Uterus (tissue), 4 donors: ENCODE measurements at regions of chr6 and their contacts with region 1.

Region 1: GRCh38 chr6:133923938-133924593 is 29.0 kb upstream of the TBPL1 start:
- DNase-seq: peak; percentile 64 to 76
- H3K4me3 ChIP-seq: no peak overlapping the region
- H3K27ac ChIP-seq: no peak overlapping the region
- H3K4me1 ChIP-seq: no peaks in the 10 kb centered on the region
- H3K27me3 ChIP-seq: peaks cover 0 to under 1% of the 10 kb centered on the region in 2 donors
- CTCF ChIP-seq: peak; percentile 81 to 94 (median 90)
- POLR2A ChIP-seq: no peak

Region 2: GRCh38 chr6:133871131-133871530 is 52.9 kb before region 1 on chr6:
- intact Hi-C with region 1: no loop called
- DNase-seq: no peak
- H3K4me3 ChIP-seq: no peak overlapping the region
- H3K27ac ChIP-seq: no peak overlapping the region
- H3K4me1 ChIP-seq: no peaks in the 10 kb centered on the region
- H3K27me3 ChIP-seq: no peaks in the 10 kb centered on the region
- CTCF ChIP-seq: no peak
- POLR2A ChIP-seq: no peak

Region 3: GRCh38 chr6:134063966-134064445 is 139.9 kb after region 1 on chr6:
- intact Hi-C with region 1: loop called (anchors 10 kb)
- DNase-seq: peak; percentile 66 to 75
- H3K4me3 ChIP-seq: no peak overlapping the region
- H3K27ac ChIP-seq: peak overlapping the region in 1 of 2 donors; percentile 50
- H3K4me1 ChIP-seq: peaks cover 0 to 4% of the 10 kb centered on the region in 2 donors
- H3K27me3 ChIP-seq: no peaks in the 10 kb centered on the region
- CTCF ChIP-seq: peak; percentile 77 to 88 (median 86)
- POLR2A ChIP-seq: no peak

Region 4: DNA sequence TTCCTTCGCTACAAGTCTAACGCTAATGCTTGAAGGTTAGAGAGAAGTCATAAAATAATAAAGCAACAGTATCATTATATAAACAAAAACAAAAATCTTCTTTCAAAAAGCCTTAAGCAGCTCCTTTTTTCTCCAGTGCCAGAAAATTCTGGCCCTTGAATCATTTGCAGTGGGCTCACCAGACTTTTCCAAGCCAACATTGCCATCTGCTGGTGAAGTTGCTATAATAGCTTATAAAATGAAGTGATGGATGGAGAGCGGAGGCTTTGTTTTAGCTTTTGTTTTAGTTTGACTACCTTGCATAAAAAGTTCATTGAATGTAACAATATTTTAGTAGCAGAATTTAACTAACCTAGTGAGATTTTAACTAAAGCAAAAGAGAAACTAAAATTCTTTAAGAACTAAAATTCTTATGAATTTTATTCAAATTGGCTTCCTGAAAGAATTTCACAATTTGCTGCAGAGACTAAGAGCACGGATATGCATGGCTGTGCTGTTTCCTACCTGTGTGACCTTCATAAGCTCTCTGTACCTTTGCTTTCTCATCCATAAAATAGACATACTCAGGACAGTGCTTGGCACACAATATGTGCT is 173.1 kb after region 1 on chr6:
- intact Hi-C with region 1: loop called (anchors 5 kb)
- DNase-seq: peak; percentile 51 to 70
- H3K4me3 ChIP-seq: no peak overlapping the region
- H3K27ac ChIP-seq: no peak overlapping the region
- H3K4me1 ChIP-seq: no peaks in the 10 kb centered on the region
- H3K27me3 ChIP-seq: no peaks in the 10 kb centered on the region
- CTCF ChIP-seq: peak; percentile 57 to 81 (median 72)
- POLR2A ChIP-seq: no peak